ENCODE measurements at regions of chr3 and their contacts with region 1.

Region 1: DNA sequence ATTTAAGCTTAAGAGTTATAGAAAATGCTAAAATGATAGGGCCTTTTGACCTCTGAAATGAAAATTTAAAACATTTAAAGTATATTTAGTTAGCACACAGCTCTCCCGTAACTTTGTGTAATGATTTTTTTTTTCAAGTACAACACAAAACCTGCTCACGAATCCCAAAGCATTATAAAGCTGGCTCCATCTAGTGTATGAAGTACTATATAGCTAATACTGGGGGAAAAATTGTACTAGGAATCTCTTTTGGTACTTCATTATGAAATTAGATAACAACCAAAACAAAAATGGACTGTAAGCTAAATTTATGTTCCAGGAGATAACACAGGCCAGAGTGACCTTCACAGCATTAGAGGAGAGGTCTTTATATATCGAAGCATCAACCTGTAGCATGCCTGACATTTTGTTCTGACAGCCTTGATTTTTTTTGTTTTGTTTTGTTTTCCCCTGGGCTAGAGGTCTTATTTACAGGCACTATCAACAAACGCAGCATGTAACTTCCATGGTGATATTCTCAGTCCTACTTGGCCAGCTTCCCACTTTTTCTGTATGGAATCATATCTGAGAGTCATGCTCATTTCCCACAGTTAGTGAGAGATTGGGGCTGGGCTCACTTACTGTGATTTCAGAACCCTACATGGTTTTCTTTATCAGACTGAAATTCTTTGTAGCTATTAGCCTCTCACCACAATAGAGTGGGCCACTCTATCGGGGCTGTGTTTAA is 116.3 kb downstream of the MITF start:
- DNase-seq: no peak
- H3K4me3 ChIP-seq: no peak overlapping the region
- H3K27ac ChIP-seq: no peak overlapping the region
- H3K27me3 ChIP-seq: no peaks in the 10 kb centered on the region
- CTCF ChIP-seq: peak; percentile 70

Region 2: DNA sequence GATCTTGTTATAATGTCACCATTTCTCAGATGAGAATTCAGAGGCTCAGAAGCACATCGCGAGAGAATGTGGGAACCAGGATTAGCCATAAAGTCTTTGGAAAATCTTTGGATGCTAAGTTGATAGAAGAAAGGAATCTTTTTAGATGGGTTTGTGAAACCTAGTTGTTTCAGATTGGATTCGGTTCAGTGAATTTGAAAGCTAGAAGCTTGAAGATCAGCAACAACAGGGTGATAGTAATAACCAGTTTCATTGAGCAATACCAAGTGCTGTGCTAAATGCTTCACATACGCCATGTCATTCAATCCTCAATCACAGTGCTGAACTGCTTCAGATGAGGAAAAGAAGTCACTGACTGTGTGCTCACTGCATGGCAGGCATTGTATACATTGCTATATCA is 163.7 kb before region 1 on chr3:
- CTCF ChIA-PET with region 1: interaction called, 27 read pairs
- POLR2A ChIA-PET with region 1: no interaction called
- DNase-seq: no peak
- H3K4me3 ChIP-seq: no peak overlapping the region
- H3K27ac ChIP-seq: no peak overlapping the region
- H3K27me3 ChIP-seq: no peaks in the 10 kb centered on the region
- CTCF ChIP-seq: no peak

Region 3: DNA sequence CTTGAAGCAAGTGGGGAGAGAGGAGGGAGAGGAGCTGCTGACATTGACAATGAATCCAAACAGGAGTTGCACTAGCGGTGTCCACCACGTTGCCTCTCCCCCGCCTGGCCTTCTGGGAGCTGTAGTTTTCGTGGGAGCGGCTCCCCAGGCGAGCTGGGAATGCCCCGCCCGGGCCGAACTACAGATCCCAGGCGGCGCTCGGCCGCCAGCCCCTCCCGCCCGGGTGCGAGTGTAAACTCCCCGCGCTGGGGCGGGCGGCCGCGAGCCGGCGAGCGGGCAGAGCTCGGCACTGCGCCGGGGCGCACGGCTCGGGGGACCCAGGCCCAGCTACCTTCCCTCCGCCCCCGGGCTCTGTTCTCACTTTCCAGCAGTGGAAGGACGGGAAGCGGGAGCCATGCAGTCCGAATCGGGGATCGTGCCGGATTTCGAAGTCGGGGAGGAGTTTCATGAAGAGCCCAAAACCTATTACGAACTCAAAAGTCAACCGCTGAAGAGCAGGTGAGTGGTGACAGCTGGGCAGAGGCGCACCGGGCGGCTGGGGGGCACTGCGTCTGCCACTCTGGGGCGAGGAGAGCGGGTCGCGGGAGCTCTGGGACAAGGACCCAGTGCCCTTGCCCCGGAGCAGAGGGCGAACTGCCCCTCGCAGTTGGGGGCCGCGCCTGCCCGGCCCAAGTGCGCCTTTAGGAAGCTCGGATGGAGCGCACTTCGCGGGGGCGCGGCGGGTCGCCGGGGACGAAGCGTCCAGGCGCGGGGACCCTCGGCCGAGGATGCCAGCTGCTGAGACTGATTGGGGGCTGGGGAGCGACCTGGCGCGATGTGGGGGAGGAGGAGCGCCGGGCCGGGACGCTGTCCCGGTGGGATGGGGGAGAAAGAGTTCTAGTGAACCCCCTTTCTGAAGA is 116.1 kb before region 1 on chr3 and contains the start of gene MITF:
- CTCF ChIA-PET with region 1: interaction called, 11 read pairs
- POLR2A ChIA-PET with region 1: no interaction called
- DNase-seq: peak; percentile 68
- H3K4me3 ChIP-seq: peak within 1 kb of the TSS; percentile 89
- H3K27ac ChIP-seq: no peak within 1 kb of the TSS
- H3K27me3 ChIP-seq: peaks cover 2% of the 10 kb centered on the region
- CTCF ChIP-seq: no peak
- polyA plus RNA-seq, gene MITF: 32.2 and 32.5 TPM in 2 replicates

Region 4: GRCh38 chr3:69838217-69838616 is 17.4 kb before region 1 on chr3:
- CTCF ChIA-PET with region 1: interaction called, 44 read pairs
- POLR2A ChIA-PET with region 1: no interaction called
- DNase-seq: peak; percentile 94
- H3K4me3 ChIP-seq: peak overlapping the region; percentile 46; the same call in 1 of the 2 replicates
- H3K27ac ChIP-seq: peak overlapping the region; percentile 75
- H3K27me3 ChIP-seq: no peaks in the 10 kb centered on the region
- CTCF ChIP-seq: no peak

Region 5: GRCh38 chr3:69865920-69866679 is 10.5 kb after region 1 on chr3:
- CTCF ChIA-PET with region 1: interaction called, 31 read pairs
- POLR2A ChIA-PET with region 1: interaction called, 4 read pairs
- DNase-seq: no peak
- H3K4me3 ChIP-seq: peak overlapping the region; percentile 33
- H3K27ac ChIP-seq: peak overlapping the region; percentile 77
- H3K27me3 ChIP-seq: no peaks in the 10 kb centered on the region
- CTCF ChIP-seq: no peak

Region 6: GRCh38 chr3:69948246-69948862 is 92.8 kb after region 1 on chr3:
- CTCF ChIA-PET with region 1: interaction called, 11 read pairs
- POLR2A ChIA-PET with region 1: no interaction called
- DNase-seq: peak; percentile 38
- H3K4me3 ChIP-seq: no peak overlapping the region
- H3K27ac ChIP-seq: no peak overlapping the region
- H3K27me3 ChIP-seq: no peaks in the 10 kb centered on the region
- CTCF ChIP-seq: peak; percentile 63

Measured in AG04450 (cell line).